ENCODE measurements at regions of chr16 and their contacts with region 1.

Region 1: DNA sequence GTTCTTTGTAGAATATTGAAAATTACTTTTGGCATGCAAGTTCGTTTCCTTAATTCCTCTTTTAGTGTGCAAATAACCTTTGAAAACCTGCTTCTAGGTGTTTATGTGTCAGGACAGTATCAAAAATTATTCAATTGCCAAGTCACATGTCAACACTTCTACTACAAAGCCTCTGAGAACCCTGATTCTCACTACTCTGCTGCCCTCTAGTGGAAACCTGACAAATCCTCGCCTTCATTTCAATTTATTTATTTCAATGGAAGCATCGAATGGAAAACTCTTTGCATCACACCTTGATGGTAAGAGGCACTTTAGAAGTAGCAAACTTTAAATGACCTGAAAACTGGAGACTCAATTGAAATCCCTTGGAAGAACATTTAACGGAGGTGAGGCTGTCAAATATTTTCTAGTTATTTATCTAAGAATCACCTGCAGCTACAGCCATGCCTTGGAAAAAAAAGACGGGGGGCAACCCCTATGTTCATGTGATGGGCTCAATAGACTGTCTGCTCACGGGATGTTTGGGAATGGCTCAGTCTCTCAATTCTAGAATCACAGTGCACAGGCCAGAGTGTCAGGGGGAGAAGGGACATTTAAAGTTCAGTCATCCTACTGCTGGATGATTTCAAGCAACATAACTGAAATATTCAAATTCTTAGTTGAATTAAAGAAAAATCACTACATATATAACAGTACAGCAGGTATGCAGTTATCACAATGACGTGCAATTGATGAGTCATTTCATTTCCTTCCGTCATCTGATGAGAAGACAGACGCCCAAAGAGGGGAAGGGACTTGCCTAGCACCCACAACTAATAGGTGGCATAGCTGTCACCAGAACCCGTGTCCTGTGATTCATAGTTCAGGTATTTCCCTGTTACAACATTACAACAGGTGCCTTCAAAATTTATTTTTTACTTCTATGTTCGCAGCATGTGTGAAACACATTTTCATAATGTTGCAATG is 563.9 kb downstream of the TOX3 start:
- DNase-seq: peak; percentile 78
- ATAC-seq: peak; percentile 72
- H3K4me3 ChIP-seq: no peak overlapping the region
- H3K27ac ChIP-seq: no peak overlapping the region
- H3K4me1 ChIP-seq: no peaks in the 10 kb centered on the region; the same call in 1 of the 2 replicates
- H3K27me3 ChIP-seq: no peaks in the 10 kb centered on the region
- CTCF ChIP-seq: peak; percentile 90
- POLR2A ChIP-seq: no peak
- RAD21 ChIP-seq: peak; percentile 96

Region 2: DNA sequence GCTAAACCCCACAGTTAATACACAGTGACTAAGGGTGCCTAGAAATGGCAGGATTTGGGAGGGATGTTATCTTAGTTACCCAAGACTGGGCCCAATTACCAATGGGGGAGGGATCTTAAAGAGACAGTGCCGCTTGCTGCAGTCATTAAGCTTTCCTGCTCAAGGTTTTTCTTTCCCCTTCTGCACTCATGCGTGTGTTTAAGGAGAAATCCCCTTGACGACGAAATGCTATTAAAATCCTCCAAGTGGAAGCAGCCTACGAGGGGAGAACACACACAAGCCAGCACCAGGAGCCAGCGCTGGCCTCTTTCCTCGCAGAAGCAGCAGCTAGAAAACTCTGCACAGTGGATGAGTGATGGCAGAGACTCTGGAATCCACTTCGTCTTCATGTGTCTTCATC is 853.9 kb before region 1 on chr16:
- CTCF ChIA-PET with region 1: no interaction called
- POLR2A ChIA-PET with region 1: no interaction called
- dilution Hi-C with region 1: no loop called
- in situ Hi-C with region 1: loop called (anchors 10 kb)
- intact Hi-C with region 1: no loop called
- DNase-seq: peak; percentile 2
- ATAC-seq: 0 out of 2 replicates have a peak, but pooled peaks have one; percentile 42
- H3K4me3 ChIP-seq: no peak overlapping the region
- H3K27ac ChIP-seq: no peak overlapping the region
- H3K4me1 ChIP-seq: peaks cover 4% of the 10 kb centered on the region; the same call in 1 of the 2 replicates
- H3K27me3 ChIP-seq: peaks cover 22% of the 10 kb centered on the region
- CTCF ChIP-seq: no peak
- POLR2A ChIP-seq: no peak
- RAD21 ChIP-seq: no peak

Region 3: DNA sequence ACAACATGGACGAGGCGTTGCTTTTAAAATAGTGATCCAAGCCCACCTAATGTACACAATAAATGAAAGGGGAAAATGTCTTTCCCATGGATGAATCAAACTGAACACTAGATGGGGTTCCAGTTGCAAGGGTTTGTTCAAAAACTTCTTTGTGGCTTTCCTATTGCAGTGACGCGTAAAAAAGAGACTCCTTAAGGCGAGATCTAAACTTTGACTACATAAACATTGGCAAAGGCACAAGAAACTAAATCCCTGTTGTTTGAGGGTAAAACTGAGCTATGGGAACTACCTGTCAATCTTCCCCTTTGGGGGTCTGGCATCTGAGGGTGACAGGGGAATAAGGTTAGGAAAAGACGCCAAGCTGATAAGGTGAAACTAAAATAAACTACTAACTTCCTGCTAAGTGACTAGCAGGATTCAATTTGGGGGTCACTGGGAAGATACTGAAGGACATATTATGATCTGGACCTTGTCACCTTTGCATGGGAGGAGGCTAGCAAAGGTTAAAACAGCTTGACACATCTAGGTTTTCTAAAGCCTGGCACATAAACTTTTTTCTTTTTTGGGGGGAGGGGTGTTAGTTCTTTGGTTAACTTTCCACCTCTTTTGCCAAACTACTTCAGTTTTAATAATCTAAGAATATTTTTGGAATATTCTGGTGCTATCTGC is 836.6 kb before region 1 on chr16:
- CTCF ChIA-PET with region 1: interaction called, 3 read pairs
- POLR2A ChIA-PET with region 1: no interaction called
- dilution Hi-C with region 1: no loop called
- in situ Hi-C with region 1: no loop called
- intact Hi-C with region 1: loop called (anchors 1 kb)
- DNase-seq: peak; percentile 75
- ATAC-seq: 0 out of 2 replicates have a peak, but pooled peaks have one; percentile 16
- H3K4me3 ChIP-seq: peak overlapping the region; percentile 34; the same call in 1 of the 2 replicates
- H3K27ac ChIP-seq: no peak overlapping the region
- H3K4me1 ChIP-seq: no peaks in the 10 kb centered on the region
- H3K27me3 ChIP-seq: no peaks in the 10 kb centered on the region
- CTCF ChIP-seq: peak; percentile 73
- POLR2A ChIP-seq: no peak
- RAD21 ChIP-seq: peak; percentile 75

Region 4: GRCh38 chr16:51762081-51762996 is 220.7 kb before region 1 on chr16:
- CTCF ChIA-PET with region 1: interaction called, 5 read pairs
- POLR2A ChIA-PET with region 1: no interaction called
- dilution Hi-C with region 1: no loop called
- in situ Hi-C with region 1: no loop called
- intact Hi-C with region 1: loop called (anchors 5 kb)
- DNase-seq: peak; percentile 70
- ATAC-seq: peak; percentile 97
- H3K4me3 ChIP-seq: no peak overlapping the region
- H3K27ac ChIP-seq: no peak overlapping the region
- H3K4me1 ChIP-seq: no peaks in the 10 kb centered on the region; the same call in 1 of the 2 replicates
- H3K27me3 ChIP-seq: no peaks in the 10 kb centered on the region
- CTCF ChIP-seq: peak; percentile 90
- POLR2A ChIP-seq: no peak
- RAD21 ChIP-seq: peak; percentile 93

Region 5: GRCh38 chr16:52078716-52079655 is 96.0 kb after region 1 on chr16:
- CTCF ChIA-PET with region 1: no interaction called
- POLR2A ChIA-PET with region 1: no interaction called
- dilution Hi-C with region 1: no loop called
- in situ Hi-C with region 1: no loop called
- intact Hi-C with region 1: no loop called
- DNase-seq: no peak
- ATAC-seq: no peak
- H3K4me3 ChIP-seq: no peak overlapping the region
- H3K27ac ChIP-seq: no peak overlapping the region
- H3K4me1 ChIP-seq: no peaks in the 10 kb centered on the region
- H3K27me3 ChIP-seq: no peaks in the 10 kb centered on the region
- CTCF ChIP-seq: no peak
- POLR2A ChIP-seq: no peak
- RAD21 ChIP-seq: no peak

Region 6: DNA sequence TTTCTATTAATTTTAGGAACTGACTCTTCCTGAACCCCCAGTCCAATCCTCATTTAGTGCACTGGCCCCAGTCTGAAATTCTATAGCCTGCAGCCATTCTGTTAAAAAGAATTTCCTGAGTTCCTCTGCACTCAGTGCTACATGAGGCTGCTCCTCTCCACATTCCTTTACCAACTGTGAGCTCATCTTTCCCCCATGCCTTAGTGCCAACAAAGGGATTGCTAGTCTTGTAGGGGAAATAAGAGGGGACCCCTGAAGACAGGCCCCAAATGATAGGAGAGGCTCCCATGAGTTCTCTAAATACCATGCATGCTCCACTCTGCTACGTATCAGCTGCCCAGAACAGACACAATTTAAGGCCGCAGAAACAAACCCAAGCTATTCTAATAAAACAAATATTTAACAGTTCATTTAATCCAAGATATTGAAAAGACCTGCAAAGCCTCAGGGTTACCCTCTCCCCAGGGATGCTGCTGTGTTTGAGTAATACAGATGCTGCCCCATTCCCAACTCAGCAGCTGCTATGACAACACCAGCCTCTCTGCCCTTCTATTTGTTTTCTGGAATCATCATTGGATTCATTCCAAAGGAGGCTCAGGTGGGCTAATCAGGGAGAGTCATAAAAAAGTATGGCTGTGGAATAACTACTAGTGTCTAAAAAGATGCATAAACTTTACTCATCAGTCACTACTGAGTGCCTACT is 335.5 kb after region 1 on chr16:
- CTCF ChIA-PET with region 1: no interaction called
- POLR2A ChIA-PET with region 1: no interaction called
- dilution Hi-C with region 1: no loop called
- in situ Hi-C with region 1: no loop called
- intact Hi-C with region 1: no loop called
- DNase-seq: no peak
- ATAC-seq: no peak
- H3K4me3 ChIP-seq: no peak overlapping the region
- H3K27ac ChIP-seq: no peak overlapping the region
- H3K4me1 ChIP-seq: no peaks in the 10 kb centered on the region
- H3K27me3 ChIP-seq: no peaks in the 10 kb centered on the region
- CTCF ChIP-seq: no peak
- POLR2A ChIP-seq: no peak
- RAD21 ChIP-seq: no peak

Region 7: GRCh38 chr16:52747078-52747595 is 764.1 kb after region 1 on chr16:
- CTCF ChIA-PET with region 1: no interaction called
- POLR2A ChIA-PET with region 1: no interaction called
- dilution Hi-C with region 1: no loop called
- in situ Hi-C with region 1: no loop called
- intact Hi-C with region 1: no loop called
- DNase-seq: no peak
- ATAC-seq: no peak
- H3K4me3 ChIP-seq: no peak overlapping the region
- H3K27ac ChIP-seq: no peak overlapping the region
- H3K4me1 ChIP-seq: no peaks in the 10 kb centered on the region
- H3K27me3 ChIP-seq: no peaks in the 10 kb centered on the region
- CTCF ChIP-seq: no peak
- POLR2A ChIP-seq: no peak
- RAD21 ChIP-seq: no peak